WTC11 (cell line): ENCODE measurements at regions of chr11 and their contacts with region 1.

Region 1: GRCh38 chr11:85810871-85811611 is at the start of gene SYTL2:
- DNase-seq: peak; percentile 81
- ATAC-seq: peak; percentile 88
- H3K4me3 Mint-ChIP-seq: peak within 1 kb of the TSS; percentile 82
- H3K27ac Mint-ChIP-seq: no peak within 1 kb of the TSS
- H3K4me1 Mint-ChIP-seq: peaks cover 16% of the 10 kb centered on the region
- H3K27me3 Mint-ChIP-seq: peaks cover 46% of the 10 kb centered on the region
- CTCF ChIP-seq: no peak
- total RNA-seq, gene SYTL2: 4.3 to 7.1 TPM (median 6.5 TPM) in 3 replicates

Region 2: GRCh38 chr11:85826116-85826855 is 15.2 kb after region 1 on chr11:
- CTCF ChIA-PET with region 1: interaction called, 16 read pairs
- POLR2A ChIA-PET with region 1: no interaction called
- DNase-seq: peak; percentile 43
- ATAC-seq: peak; percentile 93
- H3K4me3 Mint-ChIP-seq: no peak overlapping the region
- H3K27ac Mint-ChIP-seq: no peak overlapping the region
- H3K4me1 Mint-ChIP-seq: peaks cover 9% of the 10 kb centered on the region
- H3K27me3 Mint-ChIP-seq: peaks cover 4% of the 10 kb centered on the region
- CTCF ChIP-seq: peak; percentile 38; the same call in 1 of the 2 replicates

Region 3: GRCh38 chr11:85893395-85893794 is 82.4 kb after region 1 on chr11:
- CTCF ChIA-PET with region 1: no interaction called
- POLR2A ChIA-PET with region 1: no interaction called
- DNase-seq: no peak
- ATAC-seq: no peak
- H3K4me3 Mint-ChIP-seq: no peak overlapping the region
- H3K27ac Mint-ChIP-seq: no peak overlapping the region
- H3K4me1 Mint-ChIP-seq: peaks cover 15% of the 10 kb centered on the region
- H3K27me3 Mint-ChIP-seq: no peaks in the 10 kb centered on the region
- CTCF ChIP-seq: no peak